ENCODE measurements at regions of chr3 and their contacts with region 1.

Region 1: DNA sequence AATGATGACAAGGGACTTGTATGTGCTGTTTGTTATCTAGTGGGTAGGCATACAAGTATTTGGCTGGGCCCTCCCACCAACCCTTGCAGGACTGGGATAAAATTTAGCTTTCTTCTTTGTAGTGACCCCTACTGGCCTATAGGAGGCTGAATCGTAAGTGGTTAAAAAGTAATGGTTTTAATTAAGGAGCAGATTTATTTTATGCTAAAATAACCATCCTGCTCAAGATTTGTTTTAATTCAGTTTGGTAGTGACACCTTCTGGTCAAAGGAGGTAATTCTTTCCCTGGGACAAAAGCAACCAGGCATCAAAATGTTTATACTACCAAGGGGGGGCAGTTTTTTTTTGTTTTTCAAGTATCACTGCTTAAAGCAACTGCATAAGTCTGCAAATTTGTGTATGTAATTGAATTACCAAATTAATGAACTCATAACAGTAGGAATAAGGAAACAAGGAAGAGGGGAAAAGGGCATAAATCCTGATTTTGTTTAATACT is 70.7 kb downstream of the TOP2B start:
- DNase-seq: peak in 4 of 5 donors; percentile 21 to 40 (median 24)
- H3K4me3 ChIP-seq: no peak overlapping the region
- H3K4me3 Mint-ChIP-seq: no peak overlapping the region
- H3K27ac ChIP-seq: no peak overlapping the region
- H3K27ac Mint-ChIP-seq: peak overlapping the region in 3 of 7 donors; percentile 1 to 20 (median 2)
- H3K4me1 ChIP-seq: no peaks in the 10 kb centered on the region
- H3K4me1 Mint-ChIP-seq: peaks cover 0 to 2% (median 0%) of the 10 kb centered on the region in 4 donors
- H3K27me3 ChIP-seq: no peaks in the 10 kb centered on the region
- H3K27me3 Mint-ChIP-seq: no peaks in the 10 kb centered on the region

Region 2: DNA sequence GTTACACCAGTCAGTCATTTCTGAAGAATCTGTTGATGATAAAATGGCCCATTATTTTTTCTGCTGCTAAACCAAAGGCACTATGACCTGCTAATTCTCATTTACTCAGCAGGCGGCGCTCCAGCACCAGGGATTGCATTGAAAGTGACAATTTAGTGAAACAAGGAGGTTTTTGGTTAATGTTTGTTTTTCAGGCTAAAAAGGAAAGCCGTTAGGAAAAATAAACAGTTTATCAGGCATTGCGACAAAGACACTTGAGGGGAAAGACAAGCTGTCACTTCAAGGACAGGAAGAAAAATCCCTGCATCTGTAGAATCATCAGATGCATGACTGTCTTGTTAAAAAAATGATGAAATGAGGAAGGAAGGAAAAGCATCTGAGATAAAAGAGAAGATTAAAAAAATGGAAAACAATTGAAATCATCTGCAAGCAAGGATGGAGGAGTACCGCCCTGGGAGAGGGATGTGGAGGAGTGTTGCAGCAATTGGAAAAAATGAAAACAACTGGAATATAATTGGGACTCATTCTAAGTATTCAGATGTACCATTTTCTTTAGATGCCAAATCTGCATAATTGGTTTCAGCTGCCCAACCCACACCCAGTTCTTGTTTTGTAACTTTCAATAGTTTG is 1594.9 kb before region 1 on chr3:
- CTCF ChIA-PET with region 1: interaction called, 4 read pairs
- POLR2A ChIA-PET with region 1: no interaction called
- intact Hi-C with region 1: loop called (anchors 5 kb)
- DNase-seq: peak; percentile 26 to 56 (median 36)
- H3K4me3 ChIP-seq: no peak overlapping the region
- H3K4me3 Mint-ChIP-seq: no peak overlapping the region
- H3K27ac ChIP-seq: no peak overlapping the region
- H3K27ac Mint-ChIP-seq: no peak overlapping the region
- H3K4me1 ChIP-seq: no peaks in the 10 kb centered on the region
- H3K4me1 Mint-ChIP-seq: peaks cover 0 to 4% (median 0%) of the 10 kb centered on the region in 4 donors
- H3K27me3 ChIP-seq: no peaks in the 10 kb centered on the region
- H3K27me3 Mint-ChIP-seq: peaks cover 3 to 4% of the 10 kb centered on the region in 2 donors

Region 3: GRCh38 chr3:24185738-24186384 is 1408.2 kb before region 1 on chr3:
- CTCF ChIA-PET with region 1: no interaction called
- POLR2A ChIA-PET with region 1: no interaction called
- intact Hi-C with region 1: loop called (anchors 5 kb)
- DNase-seq: peak in 3 of 5 donors; percentile 0 to 3 (median 2)
- H3K4me3 ChIP-seq: no peak overlapping the region
- H3K4me3 Mint-ChIP-seq: no peak overlapping the region
- H3K27ac ChIP-seq: no peak overlapping the region
- H3K27ac Mint-ChIP-seq: no peak overlapping the region
- H3K4me1 ChIP-seq: no peaks in the 10 kb centered on the region
- H3K4me1 Mint-ChIP-seq: no peaks in the 10 kb centered on the region
- H3K27me3 ChIP-seq: no peaks in the 10 kb centered on the region
- H3K27me3 Mint-ChIP-seq: peaks cover 1 to 2% of the 10 kb centered on the region in 2 donors

Region 4: GRCh38 chr3:25604107-25604805 is 10.2 kb after region 1 on chr3:
- CTCF ChIA-PET with region 1: interaction called, 18 read pairs
- POLR2A ChIA-PET with region 1: no interaction called
- intact Hi-C with region 1: no loop called
- DNase-seq: no peak
- H3K4me3 ChIP-seq: no peak overlapping the region
- H3K4me3 Mint-ChIP-seq: no peak overlapping the region
- H3K27ac ChIP-seq: no peak overlapping the region
- H3K27ac Mint-ChIP-seq: peak overlapping the region in 4 of 7 donors; percentile 13 to 79 (median 38)
- H3K4me1 ChIP-seq: no peaks in the 10 kb centered on the region
- H3K4me1 Mint-ChIP-seq: peaks cover 0 to 1% (median 0%) of the 10 kb centered on the region in 4 donors
- H3K27me3 ChIP-seq: no peaks in the 10 kb centered on the region
- H3K27me3 Mint-ChIP-seq: no peaks in the 10 kb centered on the region

Region 5: GRCh38 chr3:25618028-25618427 is 24.0 kb after region 1 on chr3:
- CTCF ChIA-PET with region 1: interaction called, 13 read pairs
- POLR2A ChIA-PET with region 1: interaction called, 3 read pairs
- intact Hi-C with region 1: no loop called
- DNase-seq: no peak
- H3K4me3 ChIP-seq: no peak overlapping the region
- H3K4me3 Mint-ChIP-seq: no peak overlapping the region
- H3K27ac ChIP-seq: no peak overlapping the region
- H3K27ac Mint-ChIP-seq: peak overlapping the region in 5 of 7 donors; percentile 10 to 79 (median 47)
- H3K4me1 ChIP-seq: peaks cover 4% of the 10 kb centered on the region
- H3K4me1 Mint-ChIP-seq: peaks cover 0 to 14% (median 2%) of the 10 kb centered on the region in 4 donors
- H3K27me3 ChIP-seq: no peaks in the 10 kb centered on the region
- H3K27me3 Mint-ChIP-seq: no peaks in the 10 kb centered on the region